Psoas muscle (tissue), 8 donors: ENCODE measurements at regions of chr6 and their contacts with region 1.

Region 1: DNA sequence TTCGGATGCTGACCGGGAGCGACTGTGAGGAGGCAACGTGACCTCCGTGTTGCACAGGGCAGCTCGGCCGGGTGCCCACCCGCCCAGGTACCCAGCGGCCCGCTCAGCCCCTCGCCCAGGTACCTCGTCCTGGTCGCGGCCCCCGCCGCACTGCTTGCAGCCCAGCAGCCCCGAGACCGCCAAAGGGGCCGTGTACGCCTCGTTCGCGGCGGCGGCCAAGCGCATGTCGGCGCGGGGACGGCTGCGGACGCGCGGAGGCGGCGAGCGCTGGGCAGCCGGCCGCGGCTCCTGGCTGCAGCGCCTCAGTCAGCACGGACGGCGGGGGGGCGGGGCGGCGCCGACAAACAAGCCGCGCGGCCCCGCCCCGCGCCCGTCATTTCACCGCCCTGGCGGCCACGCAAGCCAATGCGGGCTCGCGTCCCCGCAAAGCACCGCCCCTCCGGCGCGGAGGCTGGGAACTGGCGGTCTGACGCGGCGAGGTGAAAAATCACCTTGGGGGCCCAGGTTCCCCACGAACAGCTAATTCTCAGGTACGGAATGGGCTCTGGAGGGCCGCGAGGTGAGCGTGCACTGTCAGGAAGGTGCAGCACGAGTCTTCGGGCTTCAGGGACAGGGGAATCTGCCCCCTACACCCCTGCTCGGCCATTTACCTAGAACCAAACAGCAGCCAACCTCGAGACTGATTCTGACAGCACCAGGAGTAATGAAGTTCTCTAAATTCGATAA is 85.2 kb downstream of the SESN1 start:
- DNase-seq: peak; percentile 97
- ATAC-seq: peak; percentile 94 to 98 (median 95)
- H3K4me3 ChIP-seq: peak overlapping the region; percentile 71
- H3K27ac ChIP-seq: peak overlapping the region; percentile 97
- H3K4me1 ChIP-seq: peaks cover 48% of the 10 kb centered on the region
- H3K27me3 ChIP-seq: no peaks in the 10 kb centered on the region
- CTCF ChIP-seq: peak; percentile 15

Region 2: DNA sequence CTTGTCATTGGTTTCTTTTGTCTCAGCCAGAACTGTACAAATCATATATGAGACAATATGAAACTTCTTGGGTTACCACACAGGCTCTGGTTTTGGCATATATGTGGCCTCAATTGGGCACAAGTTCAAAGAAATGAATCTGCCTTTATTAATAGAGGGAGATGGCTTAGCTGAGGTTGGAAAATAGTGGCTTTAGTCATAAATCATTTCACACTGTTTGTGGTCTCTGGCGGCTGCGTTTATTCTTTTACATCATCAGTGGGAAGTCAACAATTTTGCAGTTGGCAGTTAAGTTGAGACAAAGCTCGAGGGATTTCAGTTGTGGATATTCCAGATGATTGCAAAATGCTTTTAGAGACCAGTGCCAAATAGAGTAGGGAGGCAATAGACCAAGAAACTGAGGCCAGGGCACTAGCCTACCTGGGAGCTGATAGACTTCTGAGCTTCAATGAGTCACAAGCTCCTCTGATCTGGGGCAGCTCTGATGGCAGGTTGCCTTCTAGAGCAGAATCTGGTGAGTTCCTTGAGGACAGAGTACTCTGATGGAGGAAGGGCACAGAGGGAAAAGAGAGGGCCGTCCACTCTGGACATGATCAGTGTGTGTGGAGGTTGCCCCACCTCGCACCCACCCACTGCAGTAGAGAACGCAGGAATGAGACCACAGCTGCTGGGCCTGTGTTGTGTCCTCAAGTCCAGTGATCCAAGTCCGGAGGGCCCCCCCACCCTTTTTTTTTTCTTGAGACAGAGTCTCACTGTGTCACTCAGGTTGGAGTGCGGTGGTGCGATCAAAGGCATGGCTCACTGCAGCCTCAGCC is 87.6 kb before region 1 on chr6:
- intact Hi-C with region 1: no loop called
- DNase-seq: peak; percentile 33 to 65
- ATAC-seq: peak; percentile 88 to 94 (median 94)
- H3K4me3 ChIP-seq: no peak overlapping the region
- H3K27ac ChIP-seq: peak overlapping the region; percentile 72
- H3K4me1 ChIP-seq: peaks cover 18% of the 10 kb centered on the region
- H3K27me3 ChIP-seq: no peaks in the 10 kb centered on the region
- CTCF ChIP-seq: no peak

Region 3: DNA sequence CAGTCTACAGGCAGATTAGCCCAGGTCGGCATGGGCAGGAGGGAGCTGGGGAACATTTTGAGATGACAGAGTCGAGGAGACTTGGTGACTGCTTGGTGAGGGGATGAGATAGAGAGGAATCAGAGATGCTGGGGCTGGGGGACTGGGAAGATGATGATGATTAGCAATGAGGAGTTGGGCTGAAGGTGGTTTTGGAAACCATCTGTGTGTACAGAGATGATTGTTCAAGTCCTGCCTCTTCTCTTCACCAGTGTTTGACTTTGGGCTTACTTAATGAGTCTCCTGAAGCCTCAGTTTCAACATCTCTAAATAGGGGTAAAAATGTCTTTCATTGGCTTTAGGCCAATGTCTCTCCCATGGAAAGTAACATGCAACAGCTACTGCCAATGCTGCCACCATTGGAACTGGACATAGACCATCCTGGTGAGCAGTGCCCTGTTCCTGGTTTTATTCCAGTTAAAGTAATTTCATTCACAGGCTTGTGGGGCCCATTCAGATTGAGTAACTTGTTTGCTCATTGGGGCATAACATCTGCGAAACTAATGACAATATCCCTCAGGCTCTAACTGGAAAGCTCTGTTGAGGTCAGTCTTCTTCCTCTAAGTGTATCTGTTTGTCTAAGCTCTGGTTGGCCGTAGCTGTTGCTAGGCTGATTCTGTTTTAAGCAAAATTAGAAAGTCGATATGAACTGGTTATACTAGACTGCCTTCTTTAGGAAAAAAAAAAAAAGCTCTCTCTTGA is 62.1 kb before region 1 on chr6:
- intact Hi-C with region 1: loop called in 1 of 2 experiments (anchors 5 kb)
- DNase-seq: no peak
- ATAC-seq: peak in 3 of 4 donors; percentile 17 to 27 (median 22)
- H3K4me3 ChIP-seq: no peak overlapping the region
- H3K27ac ChIP-seq: peak overlapping the region; percentile 91
- H3K4me1 ChIP-seq: peaks cover 74% of the 10 kb centered on the region
- H3K27me3 ChIP-seq: no peaks in the 10 kb centered on the region
- CTCF ChIP-seq: no peak

Region 4: GRCh38 chr6:109059571-109060021 is 50.2 kb after region 1 on chr6:
- intact Hi-C with region 1: loop called (anchors 5 kb)
- DNase-seq: no peak
- ATAC-seq: peak in 3 of 4 donors; percentile 42 to 54 (median 47)
- H3K4me3 ChIP-seq: peak overlapping the region; percentile 41
- H3K27ac ChIP-seq: peak overlapping the region; percentile 77
- H3K4me1 ChIP-seq: peaks cover 62% of the 10 kb centered on the region
- H3K27me3 ChIP-seq: no peaks in the 10 kb centered on the region
- CTCF ChIP-seq: peak; percentile 38

Region 5: DNA sequence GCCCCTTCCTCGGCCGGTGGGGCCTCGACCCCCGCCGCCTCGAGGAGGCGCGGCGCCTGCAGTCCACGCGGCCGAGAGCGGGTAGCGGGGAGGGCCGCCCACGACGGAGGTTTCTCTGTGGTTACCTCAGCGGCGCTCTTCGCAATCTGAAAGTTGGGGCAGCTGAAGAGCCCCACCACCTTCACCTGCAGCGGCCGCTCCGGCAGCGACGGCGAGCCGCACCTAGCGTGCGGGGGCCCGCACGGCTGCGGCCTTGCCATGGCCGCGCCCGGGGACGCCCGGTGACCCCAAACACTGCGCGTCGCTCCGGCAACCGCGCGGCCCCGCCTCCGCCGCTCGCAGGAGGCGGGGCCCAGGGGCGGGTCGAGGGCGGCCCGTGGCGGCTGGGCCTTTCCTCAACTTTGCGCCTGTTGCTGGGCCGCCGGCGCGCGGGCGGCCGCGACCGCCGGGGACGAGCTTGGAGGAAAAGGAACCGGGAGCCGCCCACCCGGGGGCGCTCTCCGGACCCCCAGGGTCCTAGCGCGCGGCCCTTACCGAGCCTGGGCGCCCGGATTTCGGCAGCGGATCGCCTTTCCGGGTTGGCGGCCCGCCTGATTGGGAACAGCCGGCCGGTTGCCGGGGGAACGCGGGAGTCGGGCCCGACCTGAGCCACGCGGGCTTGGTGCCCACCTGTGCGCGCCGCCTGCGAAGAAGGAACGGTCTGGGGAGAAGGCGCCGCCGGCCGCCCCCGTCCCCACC is 431.1 kb after region 1 on chr6 and contains the starts of genes PPIL6 and SMPD2:
- intact Hi-C with region 1: no loop called
- DNase-seq: peak; percentile 92 to 95
- ATAC-seq: peak; percentile 90 to 94 (median 94)
- H3K4me3 ChIP-seq: peak within 1 kb of the TSS; percentile 70
- H3K27ac ChIP-seq: peak within 1 kb of the TSS; percentile 84
- H3K4me1 ChIP-seq: peaks cover 17% of the 10 kb centered on the region
- H3K27me3 ChIP-seq: no peaks in the 10 kb centered on the region
- CTCF ChIP-seq: peak; percentile 39
- total RNA-seq, gene PPIL6: 1.1 to 3.1 (median 2.6) TPM
- total RNA-seq, gene SMPD2: 2.1 to 5.1 (median 3.3) TPM